ENCODE measurements at regions of chr13 and their contacts with region 1.

Region 1: DNA sequence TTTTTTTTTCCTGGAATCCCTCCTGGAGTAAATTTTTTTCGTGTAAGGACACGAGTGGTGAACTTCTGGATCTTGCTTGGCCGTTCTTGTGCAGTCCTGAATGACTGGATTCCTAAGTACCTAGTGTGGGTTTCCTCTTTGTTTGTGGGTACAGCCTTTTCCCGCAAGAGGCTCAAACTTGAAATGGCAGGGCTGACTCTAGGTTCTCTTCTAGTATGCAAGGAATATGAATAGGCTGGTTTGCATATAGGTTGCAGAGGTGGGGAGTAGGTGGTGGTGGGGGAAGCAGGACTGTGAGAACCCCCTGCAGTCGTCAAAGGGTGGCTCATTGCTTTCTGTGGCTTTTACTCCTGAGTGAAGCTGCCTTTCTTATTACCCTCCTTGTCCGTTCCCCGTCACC is 13.6 kb downstream of the UBAC2 start:
- DNase-seq: peak; percentile 25
- ATAC-seq: peak; percentile 17
- H3K4me3 Mint-ChIP-seq: peak overlapping the region; percentile 85
- H3K27ac Mint-ChIP-seq: peak overlapping the region; percentile 92
- H3K4me1 Mint-ChIP-seq: peaks cover 62% of the 10 kb centered on the region
- H3K27me3 Mint-ChIP-seq: no peaks in the 10 kb centered on the region

Region 2: GRCh38 chr13:99124794-99125316 is 89.4 kb before region 1 on chr13:
- POLR2A ChIA-PET with region 1: no interaction called
- DNase-seq: no peak
- ATAC-seq: peak; percentile 88
- H3K4me3 Mint-ChIP-seq: peak overlapping the region; percentile 61
- H3K27ac Mint-ChIP-seq: peak overlapping the region; percentile 71
- H3K4me1 Mint-ChIP-seq: peaks cover 19% of the 10 kb centered on the region
- H3K27me3 Mint-ChIP-seq: no peaks in the 10 kb centered on the region

Region 3: DNA sequence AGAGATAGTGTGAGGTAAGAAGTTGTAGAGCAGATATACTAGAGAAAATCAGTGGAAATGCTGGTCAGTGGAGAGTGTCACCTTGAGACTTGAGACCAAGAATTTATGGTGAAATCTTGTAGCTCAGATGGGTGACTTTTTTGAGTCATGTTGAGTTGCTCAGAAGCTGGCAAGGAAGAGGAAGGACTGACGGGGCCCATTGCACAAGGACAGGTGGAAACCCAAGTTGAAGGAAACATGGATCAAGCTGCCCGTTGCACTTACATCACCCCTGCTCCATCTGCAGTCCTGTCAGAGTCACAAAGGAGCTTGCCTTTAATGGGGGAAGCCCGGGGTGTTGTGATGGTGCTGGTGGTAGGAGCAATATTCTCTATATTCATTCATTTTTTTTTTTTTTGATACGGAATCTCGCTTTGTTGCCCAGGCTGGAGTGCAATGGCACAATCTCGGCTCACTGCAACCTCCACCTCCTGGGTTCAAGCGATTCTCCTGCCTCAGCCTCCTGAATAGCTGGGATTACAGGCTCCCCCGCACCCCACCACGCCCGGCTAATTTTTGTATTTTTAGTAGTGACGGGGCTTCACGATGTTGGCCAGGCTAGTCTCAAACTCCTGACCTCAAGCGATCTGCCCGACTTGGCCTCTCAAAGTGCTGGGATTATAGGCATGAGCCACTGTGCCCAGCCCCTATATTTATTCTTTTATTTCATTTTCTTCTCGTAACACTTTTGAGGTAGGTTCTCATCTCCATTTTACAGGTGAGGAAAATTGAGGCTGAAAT is 13.9 kb after region 1 on chr13:
- POLR2A ChIA-PET with region 1: interaction called, 13 read pairs
- DNase-seq: no peak
- ATAC-seq: no peak
- H3K4me3 Mint-ChIP-seq: peak overlapping the region; percentile 85
- H3K27ac Mint-ChIP-seq: peak overlapping the region; percentile 89
- H3K4me1 Mint-ChIP-seq: peaks cover 68% of the 10 kb centered on the region
- H3K27me3 Mint-ChIP-seq: no peaks in the 10 kb centered on the region

Region 4: GRCh38 chr13:99258210-99258860 is 44.1 kb after region 1 on chr13 and contains the start of gene GPR18:
- POLR2A ChIA-PET with region 1: interaction called, 17 read pairs
- DNase-seq: no peak
- ATAC-seq: peak; percentile 87
- H3K4me3 Mint-ChIP-seq: peak within 1 kb of the TSS; percentile 90
- H3K27ac Mint-ChIP-seq: peak within 1 kb of the TSS; percentile 94
- H3K4me1 Mint-ChIP-seq: peaks cover 48% of the 10 kb centered on the region
- H3K27me3 Mint-ChIP-seq: no peaks in the 10 kb centered on the region
- total RNA-seq, gene GPR18: 25.5 to 25.9 TPM

Measured in activated naive CD8-positive, alpha-beta T cell treated with anti-CD3 and anti-CD28 coated beads, Interleukin-2, amount 10 ng/mL, durations not matched to agents 7 days and 5 days (primary cell).